Testis (tissue), 5 donors: ENCODE measurements at regions of chr3 and their contacts with region 1.

Region 1: GRCh38 chr3:107522510-107523288 is at the start of gene BBX:
- DNase-seq: peak; percentile 97
- H3K4me3 ChIP-seq: peak within 1 kb of the TSS; percentile 93 to 97
- H3K27ac ChIP-seq: peak within 1 kb of the TSS; percentile 97 to 98
- H3K4me1 ChIP-seq: peaks cover 7% of the 10 kb centered on the region
- H3K27me3 ChIP-seq: no peaks in the 10 kb centered on the region
- CTCF ChIP-seq: no peak
- POLR2A ChIP-seq: peak; percentile 75
- total RNA-seq, gene BBX: 312 to 317 TPM

Region 2: DNA sequence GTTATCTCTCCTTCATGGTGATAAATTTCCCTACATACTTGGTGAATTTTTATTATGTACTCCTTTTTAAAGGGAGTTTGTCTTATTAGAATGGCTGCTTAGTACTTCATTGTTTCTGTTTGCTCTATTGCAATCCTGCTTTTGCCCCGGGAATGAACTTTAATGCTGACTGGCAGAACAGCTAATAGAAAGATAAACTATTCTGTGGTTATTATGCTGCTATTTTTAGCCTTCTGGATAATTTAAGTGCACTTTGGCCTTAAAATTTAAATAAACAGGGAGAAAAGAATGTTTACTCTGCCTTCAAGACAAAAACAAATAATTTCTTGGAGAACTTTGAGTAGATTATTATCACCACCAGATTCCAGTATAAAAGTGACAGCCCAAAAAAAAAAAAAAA is 559.3 kb before region 1 on chr3:
- intact Hi-C with region 1: no loop called
- DNase-seq: peak; percentile 17
- H3K4me3 ChIP-seq: no peak overlapping the region
- H3K27ac ChIP-seq: peak overlapping the region in 1 of 2 donors; percentile 36
- H3K4me1 ChIP-seq: peaks cover 13% of the 10 kb centered on the region
- H3K27me3 ChIP-seq: no peaks in the 10 kb centered on the region
- CTCF ChIP-seq: no peak
- POLR2A ChIP-seq: no peak

Region 3: DNA sequence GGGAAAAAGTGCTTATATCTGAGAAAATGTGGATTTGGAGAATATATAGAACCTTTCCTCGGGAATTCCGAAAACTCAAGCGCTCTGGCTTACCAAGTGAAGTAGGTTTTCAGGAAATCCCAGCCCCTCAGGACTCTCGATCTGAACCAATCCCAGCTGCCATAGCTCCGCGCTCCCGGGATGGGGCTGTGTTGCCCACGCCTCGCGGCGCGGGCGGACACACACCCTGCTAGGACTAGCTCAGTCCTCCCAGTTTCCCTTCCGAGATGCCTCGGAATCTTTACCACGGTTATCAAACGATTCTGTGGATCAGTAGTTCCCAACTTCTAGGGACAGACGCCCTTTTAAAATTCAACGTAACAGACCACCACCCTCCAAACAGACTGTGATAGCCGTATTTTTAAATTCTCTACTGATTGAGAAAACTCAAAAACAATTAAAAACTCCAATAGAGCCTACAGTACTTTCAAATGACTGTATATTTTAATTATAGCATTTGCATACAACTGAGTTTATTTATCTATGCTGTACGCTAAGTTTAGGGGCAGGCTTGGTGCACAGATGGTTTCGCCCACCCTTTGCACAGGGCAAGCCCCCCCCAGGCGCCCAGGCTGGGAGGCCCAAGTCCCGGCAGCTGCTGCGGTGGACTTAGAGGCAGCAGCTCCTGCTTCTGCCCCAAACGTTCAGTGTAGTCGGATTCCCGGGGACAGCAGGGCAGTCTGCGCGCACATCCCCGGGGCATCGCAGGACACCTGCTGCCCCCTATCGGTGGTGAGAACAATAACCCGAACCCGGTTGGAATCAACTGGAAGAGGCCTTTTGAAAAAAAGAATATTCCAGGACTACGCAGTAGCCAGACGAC is 93.1 kb before region 1 on chr3:
- intact Hi-C with region 1: loop called (anchors 5 kb)
- DNase-seq: peak; percentile 88
- H3K4me3 ChIP-seq: peak overlapping the region; percentile 66 to 68
- H3K27ac ChIP-seq: peak overlapping the region; percentile 82 to 97
- H3K4me1 ChIP-seq: peaks cover 6% of the 10 kb centered on the region
- H3K27me3 ChIP-seq: no peaks in the 10 kb centered on the region
- CTCF ChIP-seq: peak; percentile 91 to 93 (median 92)
- POLR2A ChIP-seq: no peak